Posterior vena cava (tissue), 2 donors: ENCODE measurements at regions of chr20 and their contacts with region 1.

Region 1: DNA sequence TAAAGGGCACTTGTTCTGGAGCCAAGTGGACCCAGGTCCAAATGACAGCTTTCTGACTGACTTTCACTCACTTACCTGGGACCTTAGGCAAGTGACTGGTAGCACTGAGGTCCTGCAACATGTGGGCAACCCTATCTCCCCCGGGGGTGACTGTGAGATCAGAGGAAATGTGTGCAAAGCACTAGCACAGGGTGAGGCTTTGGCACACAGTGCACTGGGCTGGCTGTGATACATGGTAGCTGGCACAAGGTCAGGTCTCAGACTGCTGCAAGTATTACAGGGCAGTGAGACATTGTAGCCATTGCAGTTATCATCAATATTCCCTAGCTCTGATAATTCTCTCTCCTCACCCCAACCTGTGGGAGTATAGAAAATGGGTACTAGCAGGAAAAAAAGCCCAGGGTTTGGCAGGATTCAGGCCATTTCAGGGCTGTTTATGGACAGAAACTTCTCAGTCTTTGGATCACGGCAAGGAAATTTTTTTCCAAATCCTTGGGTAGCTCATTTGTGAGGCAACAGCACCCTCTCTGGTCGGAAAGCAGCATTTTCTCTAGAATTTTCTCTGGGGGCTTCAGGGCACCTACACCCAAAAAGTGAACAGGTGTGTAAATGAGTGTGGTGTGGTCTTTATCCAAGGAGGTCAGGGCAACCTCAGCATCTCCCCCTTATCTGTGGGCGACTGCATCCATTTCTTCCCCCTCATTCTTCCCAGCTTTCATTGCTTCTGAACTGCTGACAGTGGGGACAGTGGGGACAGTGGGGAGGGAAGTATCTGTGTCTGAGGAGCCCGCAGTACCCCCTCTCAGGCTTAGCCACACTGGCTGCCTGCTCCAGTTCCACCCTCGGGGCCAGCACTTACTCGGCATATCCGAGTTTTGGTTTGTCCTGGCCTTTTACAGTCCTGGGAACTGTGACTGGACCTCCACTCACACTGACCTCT is 148.7 kb upstream of the PHACTR3 start:
- DNase-seq: no peak

Region 2: DNA sequence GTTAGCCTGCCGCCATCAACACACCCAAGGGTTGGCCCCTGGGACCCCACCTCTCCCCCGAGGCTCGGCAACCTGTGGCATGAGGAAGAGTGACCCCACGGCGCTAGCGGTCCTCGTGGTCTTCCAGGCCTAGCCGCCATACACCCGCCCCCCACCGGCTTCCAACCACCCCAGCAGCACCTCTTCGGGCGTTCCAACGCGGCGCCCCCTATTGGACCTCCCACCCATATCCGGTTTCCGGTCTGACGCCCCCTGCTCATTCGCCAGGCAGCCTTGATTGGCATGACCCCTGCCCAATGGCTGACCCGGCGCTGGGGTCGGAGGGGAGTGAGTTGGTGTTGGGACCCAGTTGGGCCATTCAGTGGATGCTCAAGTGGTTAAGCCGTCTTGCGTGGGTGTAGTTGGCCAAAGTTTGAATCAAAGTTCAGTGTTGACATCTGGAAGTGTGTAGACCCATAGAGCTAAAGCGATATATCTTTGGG is 604.9 kb before region 1 on chr20 and contains the start of gene GNAS-AS1:
- intact Hi-C with region 1: loop called in 1 of 2 experiments (anchors 2 kb)
- DNase-seq: peak; percentile 86
- total RNA-seq, gene GNAS-AS1: not detected

Region 3: GRCh38 chr20:60117065-60117464 is 661.4 kb after region 1 on chr20:
- intact Hi-C with region 1: loop called in 1 of 2 experiments (anchors 10 kb)
- DNase-seq: no peak